ENCODE measurements at regions of chr12 and their contacts with region 1.

Region 1: GRCh38 chr12:94704452-94705306 is 54.3 kb upstream of the TMCC3 start:
- DNase-seq: peak in 1 of 2 donors; percentile 37
- H3K4me3 ChIP-seq: no peak overlapping the region
- H3K27ac ChIP-seq: peak overlapping the region; percentile 37 to 49
- H3K4me1 ChIP-seq: peaks cover 0 to 10% of the 10 kb centered on the region in 2 donors
- H3K27me3 ChIP-seq: no peaks in the 10 kb centered on the region
- CTCF ChIP-seq: no peak
- POLR2A ChIP-seq: no peak

Region 2: DNA sequence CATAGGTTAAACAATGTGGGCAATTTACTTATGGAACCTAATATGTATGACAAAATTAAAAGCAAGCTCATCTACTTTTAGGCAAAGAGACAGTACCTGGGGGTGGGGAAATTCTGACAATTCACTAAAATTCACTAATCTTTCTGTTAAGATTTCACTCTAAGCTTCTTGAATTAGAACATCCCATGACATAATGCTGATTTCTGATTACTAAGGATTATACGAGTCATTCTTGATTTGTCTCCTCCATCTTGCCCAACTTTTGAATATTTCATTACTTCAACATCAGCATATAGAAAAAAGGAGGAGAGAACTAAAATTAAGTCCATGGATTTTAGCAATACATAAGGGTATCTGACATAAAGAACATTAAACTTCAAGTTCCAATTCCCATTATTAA is 247.4 kb before region 1 on chr12:
- intact Hi-C with region 1: no loop called
- DNase-seq: no peak
- H3K4me3 ChIP-seq: no peak overlapping the region
- H3K27ac ChIP-seq: no peak overlapping the region
- H3K4me1 ChIP-seq: peaks cover 0 to 3% of the 10 kb centered on the region in 2 donors
- H3K27me3 ChIP-seq: no peaks in the 10 kb centered on the region
- CTCF ChIP-seq: no peak
- POLR2A ChIP-seq: no peak

Region 3: GRCh38 chr12:94649349-94650142 is 55.1 kb before region 1 on chr12:
- intact Hi-C with region 1: loop called (anchors 5 kb)
- DNase-seq: peak; percentile 27 to 51
- H3K4me3 ChIP-seq: peak overlapping the region; percentile 36 to 92
- H3K27ac ChIP-seq: peak overlapping the region; percentile 77 to 81
- H3K4me1 ChIP-seq: no peaks in the 10 kb centered on the region
- H3K27me3 ChIP-seq: no peaks in the 10 kb centered on the region
- CTCF ChIP-seq: peak in 3 of 4 experiments; percentile 9 to 50 (median 25)
- POLR2A ChIP-seq: no peak

Measured in uterus (tissue), 4 donors.